ENCODE measurements at regions of chr5 and their contacts with region 1.

Region 1: DNA sequence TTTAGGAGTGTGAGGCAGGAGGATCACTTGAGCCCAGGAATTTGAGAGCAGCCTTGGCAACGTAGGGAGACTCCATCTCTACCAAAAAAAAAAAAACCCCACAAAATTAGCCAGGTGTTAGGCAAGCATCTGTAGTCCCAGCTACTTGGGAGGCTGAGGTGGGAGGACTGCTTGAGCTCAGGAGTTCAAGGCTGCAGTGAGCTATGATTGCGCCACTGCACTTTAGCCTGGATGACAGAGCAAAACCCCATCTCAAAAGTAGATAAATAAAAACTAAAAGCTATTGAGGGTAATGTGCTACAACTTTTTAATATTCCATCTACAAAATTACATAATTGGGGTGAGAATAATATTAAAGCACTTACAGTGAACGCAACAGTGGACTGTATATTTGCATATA is 5.9 kb downstream of the BDP1 start:
- DNase-seq: no peak
- ATAC-seq: no peak
- H3K4me3 ChIP-seq: no peak overlapping the region
- H3K27ac ChIP-seq: no peak overlapping the region
- H3K4me1 ChIP-seq: peaks cover 0 to 23% (median 17%) of the 10 kb centered on the region in 9 donors
- H3K27me3 ChIP-seq: no peaks in the 10 kb centered on the region
- CTCF ChIP-seq: no peak

Region 2: GRCh38 chr5:71522151-71522550 is 60.8 kb after region 1 on chr5:
- intact Hi-C with region 1: loop called in 3 of 10 experiments (anchors 10 kb)
- DNase-seq: no peak
- ATAC-seq: no peak
- H3K4me3 ChIP-seq: no peak overlapping the region
- H3K27ac ChIP-seq: no peak overlapping the region
- H3K4me1 ChIP-seq: no peaks in the 10 kb centered on the region
- H3K27me3 ChIP-seq: no peaks in the 10 kb centered on the region
- CTCF ChIP-seq: no peak

Region 3: GRCh38 chr5:71563166-71563565 is 101.8 kb after region 1 on chr5:
- intact Hi-C with region 1: loop called in 1 of 10 experiments (anchors 10 kb)
- DNase-seq: no peak
- ATAC-seq: no peak
- H3K4me3 ChIP-seq: no peak overlapping the region
- H3K27ac ChIP-seq: no peak overlapping the region
- H3K4me1 ChIP-seq: no peaks in the 10 kb centered on the region
- H3K27me3 ChIP-seq: no peaks in the 10 kb centered on the region
- CTCF ChIP-seq: no peak

Region 4: GRCh38 chr5:71757590-71758543 is 296.5 kb after region 1 on chr5:
- intact Hi-C with region 1: no loop called
- DNase-seq: peak; percentile 28 to 48
- ATAC-seq: peak; percentile 84 to 99 (median 94)
- H3K4me3 ChIP-seq: peak overlapping the region in 6 of 10 donors; percentile 18 to 37 (median 27)
- H3K27ac ChIP-seq: peak overlapping the region in 2 of 10 donors; percentile 16 to 20
- H3K4me1 ChIP-seq: peaks cover 0 to 9% (median 0%) of the 10 kb centered on the region in 9 donors
- H3K27me3 ChIP-seq: no peaks in the 10 kb centered on the region
- CTCF ChIP-seq: peak; percentile 46 to 85 (median 74)